Dendritic cell treated with granulocyte-macrophage colony-stimulating factor and Interleukin-4, amounts not matched to agents 40 ng/mL and 50 ng/mL, for 4 days (primary cell): ENCODE measurements at regions of chr2 and their contacts with region 1.

Region 1: DNA sequence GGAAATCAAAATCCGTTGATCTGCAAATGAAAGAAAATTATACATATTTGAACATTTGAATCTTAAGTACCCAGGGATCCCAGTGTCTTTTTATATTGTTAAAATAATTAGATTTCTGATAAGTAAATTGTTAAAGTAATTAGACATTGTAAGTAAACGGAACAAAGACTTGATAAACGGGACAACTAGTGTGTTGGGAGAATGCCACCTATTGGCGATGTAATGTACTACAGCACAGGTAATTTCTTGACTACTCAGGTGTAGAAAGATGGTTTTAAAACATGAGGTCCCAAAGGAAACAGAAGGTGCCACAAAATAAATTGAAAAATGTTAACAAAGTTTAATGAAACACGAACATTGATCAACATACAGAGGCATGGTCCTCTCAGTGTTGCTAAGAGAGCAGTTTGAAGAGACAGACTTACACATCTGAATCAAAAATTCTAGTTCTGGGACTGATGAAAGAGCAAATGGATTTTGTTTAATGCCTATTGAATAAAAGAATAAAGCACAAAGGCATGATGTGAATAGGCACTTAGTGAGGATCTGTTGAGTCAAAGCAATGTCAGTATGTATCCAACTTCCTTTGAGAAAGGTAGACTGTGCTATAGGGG is 103.4 kb upstream of the RASGRP3 start:
- H3K4me3 Mint-ChIP-seq: no peak overlapping the region
- H3K27ac Mint-ChIP-seq: no peak overlapping the region
- H3K4me1 Mint-ChIP-seq: no peaks in the 10 kb centered on the region
- H3K27me3 Mint-ChIP-seq: no peaks in the 10 kb centered on the region

Region 2: GRCh38 chr2:32553829-32554432 is 819.1 kb before region 1 on chr2:
- intact Hi-C with region 1: loop called (anchors 10 kb)
- H3K4me3 Mint-ChIP-seq: no peak overlapping the region
- H3K27ac Mint-ChIP-seq: no peak overlapping the region
- H3K4me1 Mint-ChIP-seq: no peaks in the 10 kb centered on the region
- H3K27me3 Mint-ChIP-seq: no peaks in the 10 kb centered on the region

Region 3: DNA sequence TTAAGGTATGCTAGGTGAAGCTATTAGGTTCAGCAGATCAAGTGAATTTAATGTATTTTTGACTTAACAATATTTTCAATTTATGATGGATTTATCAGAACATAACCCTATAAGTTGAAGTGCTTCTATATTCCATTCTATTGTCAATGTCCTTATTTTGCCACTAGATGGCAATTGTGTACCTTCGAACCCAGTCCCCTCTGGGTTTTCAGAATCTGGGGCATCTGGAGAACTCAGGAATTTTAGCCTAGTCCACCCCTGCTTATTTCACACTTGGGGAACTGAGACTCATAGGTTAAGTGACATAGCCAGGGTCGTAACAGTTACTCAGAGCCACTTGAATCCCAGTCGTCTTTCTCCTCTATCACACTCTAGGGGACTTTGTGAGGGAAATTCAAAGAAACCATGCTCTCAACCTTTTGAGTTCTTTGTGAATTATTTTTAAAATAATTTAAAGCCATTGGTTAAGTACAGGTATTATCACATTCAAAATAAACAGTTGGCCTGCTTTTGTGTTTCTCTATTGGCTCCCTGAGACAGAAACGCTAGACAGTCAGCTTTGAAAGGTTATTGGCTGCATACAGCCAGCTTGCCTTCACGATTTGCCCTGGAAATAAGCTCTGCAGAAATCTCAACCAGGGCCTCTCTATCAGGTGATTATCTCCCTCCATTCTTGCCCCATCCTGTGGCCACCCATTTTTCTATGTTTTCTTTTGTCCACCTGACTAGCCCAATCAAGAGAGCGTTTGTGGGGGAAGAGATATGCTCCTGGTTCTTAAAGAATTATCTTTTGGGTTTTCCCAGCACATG is 600.2 kb before region 1 on chr2:
- intact Hi-C with region 1: loop called (anchors 5 kb)
- H3K4me3 Mint-ChIP-seq: no peak overlapping the region
- H3K27ac Mint-ChIP-seq: no peak overlapping the region
- H3K4me1 Mint-ChIP-seq: no peaks in the 10 kb centered on the region
- H3K27me3 Mint-ChIP-seq: no peaks in the 10 kb centered on the region

Region 4: DNA sequence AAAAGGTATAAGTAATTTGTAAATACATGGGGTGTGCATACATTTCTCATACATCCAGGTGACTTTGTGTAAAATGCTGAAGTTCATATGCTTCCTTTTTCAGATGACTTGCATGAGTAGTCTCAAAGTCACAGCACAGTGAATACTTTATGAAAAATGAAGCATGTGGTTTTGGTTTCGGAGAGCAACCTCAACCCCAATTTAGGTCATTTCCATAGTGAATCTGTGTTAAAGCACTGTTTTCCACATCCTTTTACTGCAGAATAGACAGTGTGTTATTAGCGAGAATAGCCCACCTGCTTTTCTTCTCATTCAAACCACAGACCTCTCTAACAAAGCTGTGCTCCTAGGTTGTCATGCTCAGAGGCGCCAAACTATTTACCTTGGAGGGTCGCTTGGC is 101.0 kb before region 1 on chr2:
- intact Hi-C with region 1: no loop called
- H3K4me3 Mint-ChIP-seq: no peak overlapping the region
- H3K27ac Mint-ChIP-seq: no peak overlapping the region
- H3K4me1 Mint-ChIP-seq: no peaks in the 10 kb centered on the region
- H3K27me3 Mint-ChIP-seq: no peaks in the 10 kb centered on the region